Activated naive CD4-positive, alpha-beta T cell treated with anti-CD3 and anti-CD28 coated beads for 36 hours (primary cell): ENCODE measurements at regions of chr16 and their contacts with region 1.

Region 1: GRCh38 chr16:66947302-66948065 is 12.2 kb downstream of the CES2 start:
- DNase-seq: peak; percentile 95
- H3K4me3 Mint-ChIP-seq: peak overlapping the region; percentile 81
- H3K27ac Mint-ChIP-seq: no peak overlapping the region
- H3K4me1 Mint-ChIP-seq: peaks cover 17% of the 10 kb centered on the region
- H3K27me3 Mint-ChIP-seq: peaks cover 34% of the 10 kb centered on the region

Region 2: GRCh38 chr16:66604376-66605176 is 342.9 kb before region 1 on chr16 and contains the start of gene CMTM3:
- CTCF ChIA-PET with region 1: no interaction called
- intact Hi-C with region 1: no loop called
- DNase-seq: peak; percentile 70
- H3K4me3 Mint-ChIP-seq: peak within 1 kb of the TSS; percentile 90
- H3K27ac Mint-ChIP-seq: peak within 1 kb of the TSS; percentile 85
- H3K4me1 Mint-ChIP-seq: peaks cover 40% of the 10 kb centered on the region
- H3K27me3 Mint-ChIP-seq: no peaks in the 10 kb centered on the region
- total RNA-seq, gene CMTM3: 33.7 to 35.3 TPM

Region 3: GRCh38 chr16:66900721-66901441 is 46.6 kb before region 1 on chr16:
- CTCF ChIA-PET with region 1: no interaction called
- intact Hi-C with region 1: no loop called
- DNase-seq: no peak
- H3K4me3 Mint-ChIP-seq: no peak overlapping the region
- H3K27ac Mint-ChIP-seq: no peak overlapping the region
- H3K4me1 Mint-ChIP-seq: peaks cover 3% of the 10 kb centered on the region
- H3K27me3 Mint-ChIP-seq: no peaks in the 10 kb centered on the region

Region 4: DNA sequence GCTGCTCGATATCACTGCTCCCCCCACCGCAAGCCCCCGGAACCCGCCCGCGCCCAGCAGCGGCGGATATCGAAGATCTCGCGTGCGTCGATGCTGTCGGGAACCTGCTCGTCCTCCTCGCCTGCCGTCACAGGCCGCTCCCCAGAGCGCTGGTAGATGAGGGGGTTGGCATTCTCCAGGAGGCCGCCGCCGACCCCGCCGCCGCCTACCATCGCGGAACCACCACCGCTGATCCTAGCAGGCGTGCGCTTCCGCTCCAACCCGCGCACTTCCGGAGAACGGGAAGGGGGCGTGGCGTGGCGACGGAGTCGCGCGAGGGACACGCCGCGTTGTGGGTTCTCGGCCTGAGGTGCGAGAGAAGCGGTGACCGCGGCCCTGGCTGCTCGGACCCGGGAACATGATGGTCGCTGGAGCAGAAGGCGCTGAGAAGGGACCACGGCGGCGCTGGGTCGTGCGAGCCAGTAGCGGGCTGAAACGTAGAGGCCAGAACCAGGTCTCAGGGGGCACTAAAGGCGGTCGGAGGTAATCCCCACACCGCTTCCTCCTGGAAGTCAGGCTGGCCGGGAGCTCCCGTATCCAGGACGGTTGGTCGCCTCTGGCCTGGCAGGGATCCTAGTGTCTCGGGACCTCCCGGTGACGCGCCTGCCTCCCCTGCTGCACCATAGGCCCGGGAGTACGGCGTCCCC is 13.2 kb before region 1 on chr16 and contains the start of gene CIAO2B:
- CTCF ChIA-PET with region 1: interaction called, 4 read pairs
- intact Hi-C with region 1: loop called (anchors 1 kb)
- DNase-seq: peak; percentile 90
- H3K4me3 Mint-ChIP-seq: peak within 1 kb of the TSS; percentile 99
- H3K27ac Mint-ChIP-seq: peak within 1 kb of the TSS; percentile 96
- H3K4me1 Mint-ChIP-seq: peaks cover 53% of the 10 kb centered on the region
- H3K27me3 Mint-ChIP-seq: no peaks in the 10 kb centered on the region
- total RNA-seq, gene CIAO2B: 169 to 173 TPM